Tibial artery (tissue), 4 donors: ENCODE measurements at regions of chr7 and their contacts with region 1.

Region 1: GRCh38 chr7:81499262-81500116 is 270.4 kb downstream of the HGF start:
- DNase-seq: no peak
- H3K4me3 ChIP-seq: no peak overlapping the region
- H3K27ac ChIP-seq: peak overlapping the region in 1 of 2 donors; percentile 46
- H3K4me1 ChIP-seq: peaks cover 0 to 23% (median 4%) of the 10 kb centered on the region in 4 donors
- H3K27me3 ChIP-seq: no peaks in the 10 kb centered on the region
- CTCF ChIP-seq: peak; percentile 66 to 79

Region 2: DNA sequence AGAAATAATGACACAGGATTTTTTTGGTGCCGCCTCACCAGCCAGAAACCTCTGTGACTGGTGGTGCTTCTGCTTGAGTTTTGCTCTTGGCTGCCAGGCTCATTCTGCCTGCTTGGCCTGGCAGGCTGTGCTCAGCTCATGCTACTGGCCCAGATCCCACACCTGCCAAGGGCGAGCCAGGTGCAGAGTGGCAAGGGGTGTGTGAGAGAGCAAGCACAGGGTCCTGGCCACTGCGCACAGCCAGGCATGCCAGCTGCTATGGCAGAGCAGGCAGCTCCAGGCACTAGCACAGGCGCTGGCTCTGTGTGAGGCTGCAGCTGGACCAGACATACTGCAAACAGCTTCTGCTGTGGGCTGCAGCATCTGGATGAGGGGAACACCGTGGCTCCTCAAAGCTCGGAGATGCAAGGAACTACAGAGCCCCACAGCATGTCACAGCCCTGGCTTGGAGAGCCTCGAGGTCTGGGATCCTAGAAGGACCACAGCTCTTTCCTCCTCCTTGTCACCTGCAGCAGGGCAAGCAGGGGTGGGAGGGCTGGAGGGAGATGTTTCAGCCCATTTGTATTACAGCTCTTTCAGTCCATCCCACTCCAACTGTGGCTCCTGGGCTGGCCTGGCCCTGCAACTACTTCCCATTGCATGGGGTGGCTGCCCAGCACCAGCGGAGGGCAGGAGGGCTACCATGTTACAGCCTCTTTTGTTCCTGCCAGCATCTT is 267.2 kb before region 1 on chr7:
- intact Hi-C with region 1: no loop called
- DNase-seq: no peak
- H3K4me3 ChIP-seq: no peak overlapping the region
- H3K27ac ChIP-seq: no peak overlapping the region
- H3K4me1 ChIP-seq: no peaks in the 10 kb centered on the region
- H3K27me3 ChIP-seq: no peaks in the 10 kb centered on the region
- CTCF ChIP-seq: no peak

Region 3: GRCh38 chr7:81715984-81716588 is 216.6 kb after region 1 on chr7:
- intact Hi-C with region 1: loop called (anchors 5 kb)
- DNase-seq: no peak
- H3K4me3 ChIP-seq: no peak overlapping the region
- H3K27ac ChIP-seq: peak overlapping the region in 1 of 2 donors; percentile 24
- H3K4me1 ChIP-seq: peaks cover 0 to 17% (median 0%) of the 10 kb centered on the region in 4 donors
- H3K27me3 ChIP-seq: no peaks in the 10 kb centered on the region
- CTCF ChIP-seq: peak; percentile 52 to 64